Dendritic cell treated with granulocyte-macrophage colony-stimulating factor and Interleukin-4, amounts not matched to agents 40 ng/mL and 50 ng/mL, for 4 days (primary cell): ENCODE measurements at regions of chr12 and their contacts with region 1.

Region 1: DNA sequence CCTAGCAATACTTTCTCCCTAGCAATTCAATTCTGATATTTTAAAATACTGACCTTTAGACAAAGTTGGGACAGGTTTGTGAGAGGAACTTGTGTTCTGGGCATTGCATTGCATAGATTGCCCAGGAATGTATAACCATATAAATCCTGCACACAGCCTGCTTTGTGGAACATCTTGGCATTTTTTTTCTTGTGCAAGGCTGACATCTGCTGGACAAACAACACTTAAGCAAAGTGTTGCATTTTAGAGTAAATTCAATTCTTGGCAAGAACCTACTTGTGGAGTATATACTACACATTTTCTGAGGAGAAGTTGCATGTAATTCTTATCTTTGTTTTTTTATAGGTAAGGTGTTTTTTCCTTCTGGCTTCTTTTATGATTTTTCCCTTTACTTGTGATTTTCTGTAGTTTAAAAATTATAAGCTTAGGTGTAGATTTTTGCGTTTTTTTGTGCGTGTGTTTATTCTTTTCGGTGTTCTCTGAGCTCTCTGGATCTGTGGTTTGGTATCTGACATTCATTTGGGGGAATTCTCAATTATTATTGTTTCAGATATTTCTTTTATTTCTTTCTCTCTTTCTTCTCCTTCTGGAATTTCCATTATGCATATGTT is 26.4 kb downstream of the TESPA1 start:
- H3K4me3 Mint-ChIP-seq: no peak overlapping the region
- H3K27ac Mint-ChIP-seq: no peak overlapping the region
- H3K4me1 Mint-ChIP-seq: peaks cover 36% of the 10 kb centered on the region
- H3K27me3 Mint-ChIP-seq: no peaks in the 10 kb centered on the region

Region 2: GRCh38 chr12:54463034-54463433 is 495.1 kb before region 1 on chr12:
- intact Hi-C with region 1: no loop called
- H3K4me3 Mint-ChIP-seq: no peak overlapping the region
- H3K27ac Mint-ChIP-seq: no peak overlapping the region
- H3K4me1 Mint-ChIP-seq: peaks cover 7% of the 10 kb centered on the region
- H3K27me3 Mint-ChIP-seq: no peaks in the 10 kb centered on the region

Region 3: DNA sequence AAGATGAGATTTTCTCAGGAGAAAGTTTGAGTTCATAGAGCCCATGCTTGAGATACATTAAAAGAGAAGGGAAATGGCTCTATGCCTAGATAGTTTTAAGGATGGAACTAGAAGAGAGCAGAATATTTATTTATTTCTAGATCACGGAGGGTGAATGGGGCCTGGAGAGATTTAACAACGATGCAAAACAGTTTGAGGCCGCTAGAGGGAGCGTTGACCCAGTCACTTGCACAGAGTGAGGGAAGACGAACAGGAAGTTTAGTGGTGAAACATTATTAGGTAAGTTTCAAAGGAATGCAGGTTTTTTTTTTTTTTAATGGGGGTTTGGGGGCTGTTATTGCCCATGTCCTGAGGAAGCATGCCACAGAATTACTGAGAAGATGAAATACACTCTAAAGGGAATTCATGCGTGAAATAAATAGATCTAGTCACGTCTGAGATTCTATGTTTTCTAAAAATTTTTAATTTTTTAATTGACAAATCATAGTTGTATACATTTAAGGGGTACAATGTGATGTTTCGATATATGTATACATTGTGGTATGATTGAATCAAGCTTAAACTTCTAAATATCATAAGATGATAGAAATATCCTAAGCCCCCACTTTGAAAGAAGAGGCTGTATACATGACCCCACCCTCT is 354.9 kb before region 1 on chr12:
- intact Hi-C with region 1: loop called (anchors 10 kb)
- H3K4me3 Mint-ChIP-seq: no peak overlapping the region
- H3K27ac Mint-ChIP-seq: no peak overlapping the region
- H3K4me1 Mint-ChIP-seq: no peaks in the 10 kb centered on the region
- H3K27me3 Mint-ChIP-seq: peaks cover 22% of the 10 kb centered on the region

Region 4: GRCh38 chr12:54658306-54659264 is 299.6 kb before region 1 on chr12:
- intact Hi-C with region 1: loop called (anchors 2 kb)
- H3K4me3 Mint-ChIP-seq: no peak overlapping the region
- H3K27ac Mint-ChIP-seq: no peak overlapping the region
- H3K4me1 Mint-ChIP-seq: no peaks in the 10 kb centered on the region
- H3K27me3 Mint-ChIP-seq: peaks cover 11% of the 10 kb centered on the region

Region 5: GRCh38 chr12:54701940-54702592 is 256.1 kb before region 1 on chr12:
- intact Hi-C with region 1: loop called (anchors 1 kb)
- H3K4me3 Mint-ChIP-seq: no peak overlapping the region
- H3K27ac Mint-ChIP-seq: no peak overlapping the region
- H3K4me1 Mint-ChIP-seq: peaks cover 13% of the 10 kb centered on the region
- H3K27me3 Mint-ChIP-seq: peaks cover 2% of the 10 kb centered on the region

Region 6: DNA sequence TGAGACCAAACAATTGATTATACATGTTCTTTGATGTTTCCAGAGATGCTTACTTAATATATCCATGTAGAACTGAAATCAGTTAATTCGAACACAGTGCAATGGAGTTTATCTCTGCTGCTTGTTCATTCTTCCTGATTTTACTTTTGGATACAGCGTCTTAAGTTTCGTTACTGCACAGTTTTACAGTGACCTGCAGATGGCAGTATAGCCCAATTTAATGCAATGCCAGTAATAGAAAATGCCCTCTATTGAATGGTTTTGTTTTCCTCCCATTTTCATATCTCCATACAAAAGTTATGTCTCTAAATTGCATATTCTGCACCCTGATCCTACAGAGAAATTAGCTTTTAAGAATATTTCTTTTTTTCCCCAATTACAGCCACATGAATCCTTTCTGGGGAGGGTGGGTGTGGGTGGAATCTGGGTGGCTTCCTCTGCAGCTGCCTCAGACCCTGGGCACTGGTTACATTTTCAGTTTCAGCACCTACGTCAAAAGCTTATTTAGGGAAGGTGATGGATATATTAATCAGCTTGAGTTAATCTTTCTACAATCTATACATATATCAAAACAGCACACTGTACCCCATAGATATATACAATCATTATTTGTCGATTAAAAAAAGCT is 208.8 kb before region 1 on chr12:
- intact Hi-C with region 1: loop called (anchors 1 kb)
- H3K4me3 Mint-ChIP-seq: no peak overlapping the region
- H3K27ac Mint-ChIP-seq: no peak overlapping the region
- H3K4me1 Mint-ChIP-seq: peaks cover 9% of the 10 kb centered on the region
- H3K27me3 Mint-ChIP-seq: no peaks in the 10 kb centered on the region

Region 7: GRCh38 chr12:54853995-54854566 is 104.1 kb before region 1 on chr12 and contains the start of gene MUCL1:
- intact Hi-C with region 1: loop called (anchors 1 kb)
- H3K4me3 Mint-ChIP-seq: no peak within 1 kb of the TSS
- H3K27ac Mint-ChIP-seq: no peak within 1 kb of the TSS
- H3K4me1 Mint-ChIP-seq: peaks cover 15% of the 10 kb centered on the region
- H3K27me3 Mint-ChIP-seq: no peaks in the 10 kb centered on the region